ENCODE measurements at regions of chr7 and their contacts with region 1.

Region 1: GRCh38 chr7:99631295-99632109 is 14.8 kb downstream of the ZSCAN25 start:
- DNase-seq: no peak
- ATAC-seq: peak; percentile 78 to 81

Region 2: GRCh38 chr7:99839287-99840021 is 208.0 kb after region 1 on chr7:
- intact Hi-C with region 1: loop called in 1 of 2 experiments (anchors 10 kb)
- DNase-seq: no peak
- ATAC-seq: no peak

Measured in left cardiac atrium (tissue), 4 donors.